ENCODE measurements at regions of chr12 and their contacts with region 1.

Region 1: GRCh38 chr12:9647825-9648700 is 21.4 kb upstream of the CLEC2D start:
- DNase-seq: peak; percentile 96
- ATAC-seq: peak; percentile 72
- H3K4me3 Mint-ChIP-seq: peak overlapping the region; percentile 100
- H3K27ac Mint-ChIP-seq: peak overlapping the region; percentile 100
- H3K4me1 Mint-ChIP-seq: peaks cover 58% of the 10 kb centered on the region
- H3K27me3 Mint-ChIP-seq: no peaks in the 10 kb centered on the region

Region 2: GRCh38 chr12:8108808-8109398 is 1539.2 kb before region 1 on chr12:
- CTCF ChIA-PET with region 1: no interaction called
- POLR2A ChIA-PET with region 1: no interaction called
- intact Hi-C with region 1: no loop called
- DNase-seq: peak; percentile 89
- ATAC-seq: peak; percentile 85
- H3K4me3 Mint-ChIP-seq: no peak overlapping the region
- H3K27ac Mint-ChIP-seq: peak overlapping the region; percentile 22
- H3K4me1 Mint-ChIP-seq: peaks cover 3% of the 10 kb centered on the region
- H3K27me3 Mint-ChIP-seq: no peaks in the 10 kb centered on the region

Region 3: DNA sequence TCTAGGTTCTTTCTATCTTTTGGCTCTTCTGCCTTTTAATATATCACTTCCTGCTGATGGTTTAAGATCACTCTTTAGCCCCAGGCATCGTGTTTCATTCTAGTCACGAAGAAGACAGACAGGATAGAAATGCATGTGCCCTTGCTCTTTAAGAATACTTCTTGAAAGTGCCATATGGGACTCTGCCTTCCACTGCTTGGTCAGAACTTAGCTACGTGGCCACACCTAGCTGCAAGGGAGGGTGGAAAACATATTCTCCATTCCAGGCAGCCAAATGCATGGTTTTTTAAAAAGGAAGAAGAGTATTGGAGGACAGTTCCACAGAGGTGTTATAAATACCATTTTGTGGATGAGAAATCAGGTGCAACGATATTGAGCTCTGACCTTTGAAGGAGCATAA is 183.7 kb before region 1 on chr12:
- CTCF ChIA-PET with region 1: no interaction called
- POLR2A ChIA-PET with region 1: no interaction called
- intact Hi-C with region 1: no loop called
- DNase-seq: no peak
- ATAC-seq: no peak
- H3K4me3 Mint-ChIP-seq: no peak overlapping the region
- H3K27ac Mint-ChIP-seq: no peak overlapping the region
- H3K4me1 Mint-ChIP-seq: peaks cover 10% of the 10 kb centered on the region
- H3K27me3 Mint-ChIP-seq: no peaks in the 10 kb centered on the region

Region 4: GRCh38 chr12:9634177-9634803 is 13.8 kb before region 1 on chr12:
- CTCF ChIA-PET with region 1: interaction called, 6 read pairs
- POLR2A ChIA-PET with region 1: no interaction called
- intact Hi-C with region 1: loop called in 1 of 2 experiments (anchors 1 kb)
- DNase-seq: peak; percentile 88
- ATAC-seq: peak; percentile 85
- H3K4me3 Mint-ChIP-seq: no peak overlapping the region
- H3K27ac Mint-ChIP-seq: peak overlapping the region; percentile 82
- H3K4me1 Mint-ChIP-seq: peaks cover 43% of the 10 kb centered on the region
- H3K27me3 Mint-ChIP-seq: no peaks in the 10 kb centered on the region

Region 5: GRCh38 chr12:9673404-9674225 is 25.6 kb after region 1 on chr12:
- CTCF ChIA-PET with region 1: interaction called, 124 read pairs
- POLR2A ChIA-PET with region 1: interaction called, 190 read pairs
- intact Hi-C with region 1: loop called (anchors 1 kb)
- DNase-seq: peak; percentile 89
- ATAC-seq: peak; percentile 47
- H3K4me3 Mint-ChIP-seq: peak overlapping the region; percentile 93
- H3K27ac Mint-ChIP-seq: peak overlapping the region; percentile 99
- H3K4me1 Mint-ChIP-seq: peaks cover 47% of the 10 kb centered on the region
- H3K27me3 Mint-ChIP-seq: no peaks in the 10 kb centered on the region

Region 6: DNA sequence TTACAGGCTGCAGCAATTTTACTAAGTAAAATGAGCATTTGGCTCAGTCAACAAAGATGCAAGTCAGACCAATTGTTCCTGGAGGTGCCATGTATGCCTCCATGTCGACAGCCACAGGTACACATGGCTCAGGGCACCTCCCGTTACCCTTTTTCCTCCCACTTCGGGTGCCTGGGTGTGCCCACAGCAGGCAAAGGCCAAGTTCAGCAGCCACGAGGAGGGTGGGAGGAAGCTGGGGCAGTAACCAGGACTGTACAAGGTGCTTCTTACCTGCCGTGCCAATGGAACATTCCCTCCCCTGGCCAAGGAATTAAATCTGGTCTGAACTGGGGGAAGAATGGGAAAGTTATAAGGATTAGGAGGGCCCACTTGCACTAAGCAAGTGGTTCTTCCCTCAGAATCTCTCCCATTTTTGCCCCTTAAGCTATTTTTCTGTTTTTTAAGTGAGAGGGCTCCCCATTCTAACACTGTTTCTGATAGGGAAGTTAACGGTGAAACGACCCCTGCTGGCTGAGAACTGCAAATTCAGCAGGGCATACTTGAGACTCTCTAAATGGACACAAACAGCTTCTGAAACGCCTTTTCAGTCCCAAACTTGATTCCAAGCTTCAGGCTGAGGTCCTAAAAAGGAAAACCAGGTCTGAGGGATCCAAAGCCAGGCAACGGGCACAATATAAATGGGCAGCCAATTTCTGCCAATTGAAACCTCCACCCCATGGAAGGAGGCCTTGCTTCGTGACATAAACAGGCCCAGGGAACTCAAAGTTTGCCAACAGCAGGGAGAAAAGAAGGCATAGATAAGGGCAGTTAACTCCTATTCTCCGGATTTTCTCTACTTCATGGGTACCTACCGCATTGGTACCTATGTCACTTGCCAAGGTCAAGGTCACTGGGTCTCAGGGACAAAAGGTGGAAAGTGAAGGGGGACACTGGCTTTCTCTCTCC is 60.1 kb after region 1 on chr12:
- CTCF ChIA-PET with region 1: interaction called, 6 read pairs
- POLR2A ChIA-PET with region 1: interaction called, 4 read pairs
- intact Hi-C with region 1: loop called in 1 of 2 experiments (anchors 1 kb)
- DNase-seq: peak; percentile 82
- ATAC-seq: peak; percentile 85
- H3K4me3 Mint-ChIP-seq: peak overlapping the region; percentile 60
- H3K27ac Mint-ChIP-seq: peak overlapping the region; percentile 94
- H3K4me1 Mint-ChIP-seq: peaks cover 50% of the 10 kb centered on the region
- H3K27me3 Mint-ChIP-seq: no peaks in the 10 kb centered on the region

Region 7: GRCh38 chr12:9760699-9761418 is 112.8 kb after region 1 on chr12 and contains the start of gene CD69:
- CTCF ChIA-PET with region 1: interaction called, 3 read pairs
- POLR2A ChIA-PET with region 1: interaction called, 21 read pairs
- intact Hi-C with region 1: loop called (anchors 1 kb)
- DNase-seq: peak; percentile 87
- ATAC-seq: peak; percentile 55
- H3K4me3 Mint-ChIP-seq: peak within 1 kb of the TSS; percentile 99
- H3K27ac Mint-ChIP-seq: peak within 1 kb of the TSS; percentile 100
- H3K4me1 Mint-ChIP-seq: peaks cover 49% of the 10 kb centered on the region
- H3K27me3 Mint-ChIP-seq: no peaks in the 10 kb centered on the region
- total RNA-seq, gene CD69: 97.9 to 127 TPM

Region 8: GRCh38 chr12:9851927-9852326 is 203.9 kb after region 1 on chr12:
- CTCF ChIA-PET with region 1: no interaction called
- POLR2A ChIA-PET with region 1: no interaction called
- intact Hi-C with region 1: no loop called
- DNase-seq: no peak
- ATAC-seq: no peak
- H3K4me3 Mint-ChIP-seq: no peak overlapping the region
- H3K27ac Mint-ChIP-seq: no peak overlapping the region
- H3K4me1 Mint-ChIP-seq: peaks cover 18% of the 10 kb centered on the region
- H3K27me3 Mint-ChIP-seq: no peaks in the 10 kb centered on the region

Region 9: GRCh38 chr12:9869307-9870161 is 221.5 kb after region 1 on chr12 and contains the start of gene CLEC2B:
- CTCF ChIA-PET with region 1: no interaction called
- POLR2A ChIA-PET with region 1: interaction called, 3 read pairs
- intact Hi-C with region 1: loop called (anchors 1 to 5 kb)
- DNase-seq: peak; percentile 59
- ATAC-seq: peak; percentile 69
- H3K4me3 Mint-ChIP-seq: peak within 1 kb of the TSS; percentile 77
- H3K27ac Mint-ChIP-seq: peak within 1 kb of the TSS; percentile 95
- H3K4me1 Mint-ChIP-seq: peaks cover 23% of the 10 kb centered on the region
- H3K27me3 Mint-ChIP-seq: no peaks in the 10 kb centered on the region
- total RNA-seq, gene CLEC2B: 21.8 to 25.8 TPM